CD8-positive, alpha-beta memory T cell (primary cell): ENCODE measurements at regions of chr21 and their contacts with region 1.

Region 1: DNA sequence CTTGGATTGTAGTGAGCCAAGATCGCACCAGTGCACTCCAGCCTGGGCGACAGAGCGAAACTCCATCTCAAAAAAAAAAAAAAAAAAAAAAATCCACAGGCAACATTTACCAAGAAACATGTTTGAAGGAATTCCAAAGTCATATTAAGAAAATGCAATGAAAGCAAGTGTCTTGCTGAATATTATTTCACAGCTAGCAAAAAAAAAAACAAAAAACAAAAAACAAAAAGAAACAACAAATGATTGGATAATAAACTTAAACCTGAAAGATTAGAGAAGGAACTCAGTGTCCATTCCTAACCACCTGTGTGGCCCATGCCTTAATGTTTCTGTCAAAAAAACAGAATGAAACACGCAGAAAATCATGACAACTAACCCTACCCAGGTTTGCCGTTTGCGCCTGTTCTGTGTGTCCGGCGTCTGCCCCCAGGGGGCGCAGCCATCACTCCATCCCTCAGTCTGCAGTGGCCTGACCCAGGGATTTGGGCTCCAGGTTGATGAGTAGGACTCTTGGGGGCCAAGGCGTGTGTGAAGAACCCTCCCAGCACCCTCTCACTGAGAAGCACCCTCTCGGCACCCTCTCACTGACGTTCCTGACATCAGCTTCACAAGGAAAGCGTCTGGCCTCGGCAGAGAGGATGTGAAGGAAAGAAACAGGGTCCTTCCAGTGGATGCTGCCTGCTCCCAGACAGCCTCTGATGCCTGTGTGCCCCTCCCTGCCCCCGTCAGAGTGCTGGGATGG is 19.2 kb upstream of the PTTG1IP start:
- DNase-seq: peak; percentile 67 to 79 (median 69)
- H3K4me3 ChIP-seq: no peak overlapping the region
- H3K4me3 Mint-ChIP-seq: no peak overlapping the region
- H3K27ac ChIP-seq: no peak overlapping the region
- H3K27ac Mint-ChIP-seq: peak overlapping the region; percentile 46 to 93 (median 81)
- H3K4me1 ChIP-seq: peaks cover 11% of the 10 kb centered on the region
- H3K4me1 Mint-ChIP-seq: peaks cover 12 to 19% (median 13%) of the 10 kb centered on the region in 3 donors
- H3K27me3 ChIP-seq: no peaks in the 10 kb centered on the region
- H3K27me3 Mint-ChIP-seq: no peaks in the 10 kb centered on the region

Region 2: DNA sequence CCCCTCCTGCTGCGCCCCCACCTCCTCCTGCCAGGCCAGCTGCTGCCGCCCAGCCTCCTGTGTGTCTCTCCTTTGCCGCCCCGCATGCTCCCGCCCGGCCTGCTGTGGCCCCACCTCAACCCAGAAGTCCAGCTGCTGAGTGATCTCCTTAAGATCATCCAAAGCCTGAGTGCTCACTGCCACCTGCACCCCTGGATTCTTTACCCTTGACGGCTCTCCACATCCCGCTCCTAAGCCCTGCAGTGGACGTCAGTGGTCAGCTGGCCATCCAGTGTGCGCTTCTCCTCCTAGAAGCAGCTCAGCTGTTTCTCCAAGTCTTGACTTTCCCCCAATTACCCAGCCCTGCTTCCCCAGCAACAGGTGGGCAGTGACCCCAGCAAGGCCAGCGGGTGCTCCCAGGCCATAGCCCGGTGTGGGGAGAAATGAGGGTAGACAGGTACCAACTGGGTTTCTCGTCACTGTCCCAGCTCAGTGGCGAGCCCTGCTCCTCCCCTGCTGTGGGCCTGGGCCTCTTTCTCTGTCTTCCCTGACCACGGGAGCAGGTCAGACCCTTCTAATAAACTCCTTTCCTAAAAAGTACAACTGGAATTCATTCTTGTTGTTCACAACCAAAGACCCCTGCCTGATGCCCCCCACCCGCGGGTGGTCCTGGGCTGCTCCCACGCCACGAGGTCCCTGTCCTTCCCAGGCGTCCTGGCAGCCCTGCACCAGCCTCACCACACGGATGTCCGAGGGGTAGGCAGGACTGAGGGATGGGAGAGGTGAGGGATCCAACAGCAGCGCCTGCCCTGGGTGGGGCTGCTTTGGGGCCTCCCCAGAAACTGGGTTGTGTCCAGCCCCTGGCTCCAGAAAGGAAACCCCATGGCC is 290.9 kb before region 1 on chr21:
- CTCF ChIA-PET with region 1: no interaction called
- POLR2A ChIA-PET with region 1: no interaction called
- DNase-seq: no peak
- H3K4me3 ChIP-seq: no peak overlapping the region
- H3K4me3 Mint-ChIP-seq: no peak overlapping the region
- H3K27ac ChIP-seq: no peak overlapping the region
- H3K27ac Mint-ChIP-seq: peak overlapping the region in 3 of 8 donors; percentile 17 to 68 (median 37)
- H3K4me1 ChIP-seq: no peaks in the 10 kb centered on the region
- H3K4me1 Mint-ChIP-seq: no peaks in the 10 kb centered on the region
- H3K27me3 ChIP-seq: no peaks in the 10 kb centered on the region
- H3K27me3 Mint-ChIP-seq: peaks cover 16 to 26% of the 10 kb centered on the region in 2 donors

Region 3: DNA sequence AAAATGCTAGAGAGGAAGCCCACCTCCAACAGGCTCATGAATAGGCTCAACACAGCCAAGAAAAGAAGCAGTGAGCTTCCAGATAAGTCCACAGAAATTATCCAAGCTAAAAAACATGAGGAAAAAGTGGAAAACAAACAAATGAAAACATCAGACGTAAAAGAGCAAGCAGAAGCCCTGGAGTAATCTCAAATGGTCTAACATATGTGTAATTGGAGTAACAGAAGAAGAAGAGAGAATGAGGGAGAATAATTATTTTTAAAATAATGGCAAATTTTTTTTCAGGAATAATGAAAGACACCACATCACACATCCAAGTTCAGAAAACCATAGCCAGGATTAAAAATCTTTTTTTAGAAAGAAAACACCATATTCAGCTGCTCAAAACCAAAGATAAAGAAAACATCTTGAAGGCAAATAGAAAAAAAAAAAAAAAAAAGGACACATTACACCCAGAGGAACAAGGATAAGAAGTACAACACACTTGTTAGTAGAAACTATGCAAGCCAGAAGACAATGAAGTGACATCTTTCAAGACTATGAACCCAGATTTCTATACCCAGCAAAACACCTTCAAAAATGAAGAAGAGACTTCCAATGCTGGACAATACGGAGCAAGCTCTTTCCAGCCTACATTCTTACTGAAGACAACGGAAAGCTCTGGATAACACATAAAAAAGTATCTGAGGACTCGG is 64.2 kb before region 1 on chr21:
- CTCF ChIA-PET with region 1: no interaction called
- POLR2A ChIA-PET with region 1: no interaction called
- DNase-seq: no peak
- H3K4me3 ChIP-seq: no peak overlapping the region
- H3K4me3 Mint-ChIP-seq: no peak overlapping the region
- H3K27ac ChIP-seq: no peak overlapping the region
- H3K27ac Mint-ChIP-seq: peak overlapping the region in 2 of 8 donors; percentile 61
- H3K4me1 ChIP-seq: no peaks in the 10 kb centered on the region
- H3K4me1 Mint-ChIP-seq: peaks cover 0 to 9% (median 6%) of the 10 kb centered on the region in 3 donors
- H3K27me3 ChIP-seq: no peaks in the 10 kb centered on the region
- H3K27me3 Mint-ChIP-seq: peaks cover 4 to 6% of the 10 kb centered on the region in 2 donors

Region 4: GRCh38 chr21:44880762-44881585 is 11.7 kb before region 1 on chr21:
- CTCF ChIA-PET with region 1: interaction called, 30 read pairs
- POLR2A ChIA-PET with region 1: no interaction called
- DNase-seq: no peak
- H3K4me3 ChIP-seq: no peak overlapping the region
- H3K4me3 Mint-ChIP-seq: no peak overlapping the region
- H3K27ac ChIP-seq: no peak overlapping the region
- H3K27ac Mint-ChIP-seq: peak overlapping the region in 6 of 8 donors; percentile 55 to 88 (median 64)
- H3K4me1 ChIP-seq: peaks cover 24% of the 10 kb centered on the region
- H3K4me1 Mint-ChIP-seq: peaks cover 21 to 24% (median 24%) of the 10 kb centered on the region in 3 donors
- H3K27me3 ChIP-seq: no peaks in the 10 kb centered on the region
- H3K27me3 Mint-ChIP-seq: no peaks in the 10 kb centered on the region

Region 5: GRCh38 chr21:44911389-44912157 is 18.9 kb after region 1 on chr21:
- CTCF ChIA-PET with region 1: interaction called, 57 read pairs
- POLR2A ChIA-PET with region 1: interaction called, 9 read pairs
- DNase-seq: peak; percentile 44 to 82 (median 75)
- H3K4me3 ChIP-seq: peak overlapping the region; percentile 47
- H3K4me3 Mint-ChIP-seq: peak overlapping the region; percentile 56 to 89 (median 78)
- H3K27ac ChIP-seq: peak overlapping the region; percentile 53
- H3K27ac Mint-ChIP-seq: peak overlapping the region; percentile 82 to 99 (median 93)
- H3K4me1 ChIP-seq: peaks cover 95% of the 10 kb centered on the region
- H3K4me1 Mint-ChIP-seq: peaks cover 57 to 77% (median 65%) of the 10 kb centered on the region in 3 donors
- H3K27me3 ChIP-seq: no peaks in the 10 kb centered on the region
- H3K27me3 Mint-ChIP-seq: no peaks in the 10 kb centered on the region

Region 6: DNA sequence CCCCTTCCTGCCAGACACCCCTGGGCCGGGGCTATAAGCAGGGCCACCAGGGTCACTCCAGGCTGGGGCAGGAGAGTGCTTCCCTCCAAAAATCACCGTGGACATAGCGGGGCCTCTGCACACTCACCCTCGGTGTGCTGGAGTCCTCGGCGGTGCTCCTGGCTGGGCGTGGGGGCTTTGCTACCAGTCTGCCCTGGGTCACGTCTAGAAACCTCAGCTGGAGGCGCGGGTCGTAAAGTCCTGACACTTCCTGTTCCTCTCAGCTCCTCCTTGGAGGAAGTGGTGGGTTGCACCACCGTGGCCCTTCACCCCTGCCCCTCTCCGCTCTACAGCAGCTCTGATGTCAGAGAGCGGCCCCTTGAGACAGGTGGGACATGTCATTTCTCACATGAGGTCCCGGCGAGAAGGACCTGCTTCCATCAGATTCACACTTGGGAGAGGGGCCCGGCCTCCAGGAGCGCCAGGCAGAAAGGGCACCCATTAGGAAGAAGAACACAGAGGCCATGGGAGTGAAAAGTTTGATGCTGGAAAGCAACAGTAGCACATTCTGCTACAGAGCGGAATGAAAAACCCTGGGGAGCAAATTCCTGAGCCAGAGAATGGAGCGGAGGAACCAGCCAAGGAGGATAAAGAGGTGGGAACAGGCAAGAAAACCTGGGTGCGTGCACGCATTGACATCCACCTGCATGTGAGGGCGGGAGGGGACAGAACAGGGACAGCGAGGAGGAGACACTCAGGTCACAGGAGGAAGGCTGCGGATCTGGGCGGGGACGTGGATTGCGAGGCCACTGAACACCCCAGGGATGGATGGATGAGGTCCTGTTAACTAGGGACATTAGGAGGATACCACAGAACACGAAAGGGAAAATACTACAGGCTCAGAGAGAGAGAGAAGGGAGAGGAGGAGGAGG is 28.2 kb after region 1 on chr21 and contains the start of gene ITGB2:
- CTCF ChIA-PET with region 1: interaction called, 184 read pairs
- POLR2A ChIA-PET with region 1: interaction called, 4 read pairs
- DNase-seq: peak; percentile 49 to 81 (median 54)
- H3K4me3 ChIP-seq: peak within 1 kb of the TSS; percentile 94
- H3K4me3 Mint-ChIP-seq: peak within 1 kb of the TSS; percentile 95 to 100 (median 99)
- H3K27ac ChIP-seq: peak within 1 kb of the TSS; percentile 71
- H3K27ac Mint-ChIP-seq: peak within 1 kb of the TSS; percentile 88 to 99 (median 97)
- H3K4me1 ChIP-seq: peaks cover 65% of the 10 kb centered on the region
- H3K4me1 Mint-ChIP-seq: peaks cover 68 to 90% (median 82%) of the 10 kb centered on the region in 3 donors
- H3K27me3 ChIP-seq: no peaks in the 10 kb centered on the region
- H3K27me3 Mint-ChIP-seq: no peaks in the 10 kb centered on the region
- total RNA-seq, gene ITGB2: 159 to 165 TPM

Region 7: GRCh38 chr21:45551316-45551715 is 658.6 kb after region 1 on chr21:
- CTCF ChIA-PET with region 1: no interaction called
- POLR2A ChIA-PET with region 1: no interaction called
- DNase-seq: peak in 1 of 5 donors; percentile 44
- H3K4me3 ChIP-seq: peak overlapping the region; percentile 44
- H3K4me3 Mint-ChIP-seq: peak overlapping the region; percentile 45 to 87 (median 79)
- H3K27ac ChIP-seq: no peak overlapping the region
- H3K27ac Mint-ChIP-seq: peak overlapping the region; percentile 43 to 96 (median 91)
- H3K4me1 ChIP-seq: peaks cover 35% of the 10 kb centered on the region
- H3K4me1 Mint-ChIP-seq: peaks cover 26 to 45% (median 33%) of the 10 kb centered on the region in 3 donors
- H3K27me3 ChIP-seq: no peaks in the 10 kb centered on the region
- H3K27me3 Mint-ChIP-seq: no peaks in the 10 kb centered on the region